GM12878 (cell line): ENCODE measurements at regions of chr19 and their contacts with region 1.

Region 1: GRCh38 chr19:18167975-18168645 is 5.5 kb upstream of the IFI30 start:
- DNase-seq: no peak
- ATAC-seq: peak; percentile 65
- H3K4me3 ChIP-seq: no peak overlapping the region
- H3K27ac ChIP-seq: 0 out of 2 replicates have a peak overlapping the region, but pooled peaks have one; percentile 4
- H3K4me1 ChIP-seq: peaks cover 44% of the 10 kb centered on the region
- H3K27me3 ChIP-seq: no peaks in the 10 kb centered on the region
- CTCF ChIP-seq: peak; percentile 87 to 90 (median 87)
- EP300 ChIP-seq: no peak
- POLR2A ChIP-seq: no peak
- RAD21 ChIP-seq: peak; percentile 77

Region 2: DNA sequence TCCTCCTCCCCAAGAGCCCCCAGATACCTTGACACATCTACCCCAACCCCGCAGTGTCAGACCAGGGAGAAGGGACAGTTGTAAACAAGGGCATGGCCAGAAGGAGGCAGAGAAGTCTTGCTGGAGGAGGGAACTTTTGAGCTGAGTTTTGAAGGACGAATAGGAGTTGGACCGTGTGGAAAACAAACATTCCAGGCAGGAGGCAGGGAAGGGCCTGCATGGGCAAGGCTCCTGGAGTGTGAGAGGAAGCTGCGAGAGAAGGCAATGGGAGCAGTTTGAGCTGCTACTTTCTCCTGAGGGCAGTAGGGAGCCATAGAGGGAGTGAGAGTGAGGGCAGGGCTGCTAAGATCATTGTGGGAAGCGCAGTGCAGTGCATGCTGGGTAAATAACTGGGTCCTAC is 104.6 kb before region 1 on chr19:
- CTCF ChIA-PET with region 1: interaction called, 21 read pairs
- POLR2A ChIA-PET with region 1: no interaction called
- RAD21 ChIA-PET with region 1: interaction called, 9 read pairs
- SMC1A ChIA-PET with region 1: interaction called, 4 read pairs
- in situ Hi-C with region 1: no loop called
- intact Hi-C with region 1: loop called (anchors 2 kb)
- DNase-seq: no peak
- ATAC-seq: peak; percentile 59
- H3K4me3 ChIP-seq: no peak overlapping the region
- H3K27ac ChIP-seq: no peak overlapping the region
- H3K4me1 ChIP-seq: no peaks in the 10 kb centered on the region
- H3K27me3 ChIP-seq: no peaks in the 10 kb centered on the region
- CTCF ChIP-seq: peak; percentile 59 to 67 (median 60)
- EP300 ChIP-seq: no peak
- POLR2A ChIP-seq: no peak
- RAD21 ChIP-seq: peak; percentile 74

Region 3: DNA sequence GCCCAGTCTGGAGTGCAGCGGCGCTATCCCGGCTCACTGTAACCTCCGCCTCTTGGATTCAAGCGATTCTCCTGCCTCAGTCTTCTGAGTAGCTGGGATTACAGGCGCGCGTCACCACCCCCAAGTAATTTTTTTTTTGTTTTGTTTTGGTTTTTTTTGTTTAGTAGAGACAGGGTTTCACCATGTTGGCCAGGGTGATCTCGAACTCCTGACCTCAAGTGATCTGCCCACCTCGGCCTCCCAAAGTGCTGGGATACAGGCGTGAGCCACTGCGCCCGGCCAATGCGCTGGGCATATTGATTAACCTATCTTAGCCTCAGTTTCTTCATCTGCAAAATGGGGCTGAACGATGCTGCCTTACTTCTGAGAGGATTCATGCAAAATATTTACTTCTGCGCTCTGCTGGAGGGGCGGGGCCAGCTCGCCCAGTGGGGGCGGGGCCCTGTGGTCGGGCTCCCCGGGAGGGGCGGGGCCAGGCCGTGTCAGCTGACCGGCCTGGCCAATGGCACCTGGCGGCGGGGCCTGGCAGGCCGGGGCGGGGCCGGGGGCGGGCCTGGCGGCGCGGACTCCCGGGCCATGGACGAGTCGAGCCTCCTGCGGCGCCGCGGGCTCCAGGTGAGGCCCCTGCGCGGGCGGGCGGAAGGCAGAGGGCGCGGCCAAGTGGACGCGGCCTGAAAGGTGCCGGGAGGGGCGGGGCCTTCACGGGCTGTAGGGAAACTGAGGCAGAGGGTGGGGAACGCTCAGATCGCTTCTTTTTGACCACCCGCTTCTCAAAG is 70.7 kb before region 1 on chr19 and contains the start of gene MAST3:
- CTCF ChIA-PET with region 1: interaction called, 4 read pairs
- POLR2A ChIA-PET with region 1: interaction called, 11 read pairs
- RAD21 ChIA-PET with region 1: interaction called, 8 read pairs
- SMC1A ChIA-PET with region 1: interaction called, 3 read pairs
- in situ Hi-C with region 1: no loop called
- intact Hi-C with region 1: loop called (anchors 5 kb)
- DNase-seq: peak; percentile 64
- ATAC-seq: peak; percentile 85
- H3K4me3 ChIP-seq: peak within 1 kb of the TSS; percentile 96
- H3K27ac ChIP-seq: peak within 1 kb of the TSS; percentile 87
- H3K4me1 ChIP-seq: peaks cover 11% of the 10 kb centered on the region
- H3K27me3 ChIP-seq: no peaks in the 10 kb centered on the region
- CTCF ChIP-seq: no peak
- EP300 ChIP-seq: no peak
- POLR2A ChIP-seq: peak; percentile 78
- RAD21 ChIP-seq: no peak
- polyA plus RNA-seq, gene MAST3: 3.5 to 8.5 TPM

Region 4: GRCh38 chr19:18152444-18152816 is 15.7 kb before region 1 on chr19:
- CTCF ChIA-PET with region 1: interaction called, 17 read pairs
- POLR2A ChIA-PET with region 1: interaction called, 5 read pairs
- RAD21 ChIA-PET with region 1: interaction called, 5 read pairs
- SMC1A ChIA-PET with region 1: interaction called, 7 read pairs
- in situ Hi-C with region 1: no loop called
- intact Hi-C with region 1: loop called (anchors 2 kb)
- DNase-seq: peak; percentile 99
- ATAC-seq: peak; percentile 85
- H3K4me3 ChIP-seq: peak overlapping the region; percentile 59; the same call in 1 of the 2 replicates
- H3K27ac ChIP-seq: peak overlapping the region; percentile 88
- H3K4me1 ChIP-seq: peaks cover 15% of the 10 kb centered on the region
- H3K27me3 ChIP-seq: no peaks in the 10 kb centered on the region
- CTCF ChIP-seq: peak; percentile 79 to 90 (median 85)
- EP300 ChIP-seq: peak in 1 of 2 experiments; percentile 7; a peak in 1 of 4 replicates
- POLR2A ChIP-seq: peak; percentile 68
- RAD21 ChIP-seq: peak; percentile 46; the same call in 1 of the 2 replicates

Region 5: GRCh38 chr19:18192673-18193387 is 24.7 kb after region 1 on chr19 and contains the start of gene MPV17L2:
- CTCF ChIA-PET with region 1: interaction called, 9 read pairs
- POLR2A ChIA-PET with region 1: interaction called, 24 read pairs
- RAD21 ChIA-PET with region 1: interaction called, 29 read pairs
- SMC1A ChIA-PET with region 1: interaction called, 20 read pairs
- in situ Hi-C with region 1: no loop called
- intact Hi-C with region 1: loop called (anchors 1 kb)
- DNase-seq: peak; percentile 100
- ATAC-seq: peak; percentile 94
- H3K4me3 ChIP-seq: peak within 1 kb of the TSS; percentile 79
- H3K27ac ChIP-seq: peak within 1 kb of the TSS; percentile 65
- H3K4me1 ChIP-seq: peaks cover 11% of the 10 kb centered on the region
- H3K27me3 ChIP-seq: no peaks in the 10 kb centered on the region
- CTCF ChIP-seq: no peak
- EP300 ChIP-seq: 0 out of 4 replicates have a peak, but pooled peaks of 1 of the 2 experiments have one; percentile 8
- POLR2A ChIP-seq: peak; percentile 72
- RAD21 ChIP-seq: no peak
- polyA plus RNA-seq, gene MPV17L2: 5.1 to 7.7 TPM

Region 6: DNA sequence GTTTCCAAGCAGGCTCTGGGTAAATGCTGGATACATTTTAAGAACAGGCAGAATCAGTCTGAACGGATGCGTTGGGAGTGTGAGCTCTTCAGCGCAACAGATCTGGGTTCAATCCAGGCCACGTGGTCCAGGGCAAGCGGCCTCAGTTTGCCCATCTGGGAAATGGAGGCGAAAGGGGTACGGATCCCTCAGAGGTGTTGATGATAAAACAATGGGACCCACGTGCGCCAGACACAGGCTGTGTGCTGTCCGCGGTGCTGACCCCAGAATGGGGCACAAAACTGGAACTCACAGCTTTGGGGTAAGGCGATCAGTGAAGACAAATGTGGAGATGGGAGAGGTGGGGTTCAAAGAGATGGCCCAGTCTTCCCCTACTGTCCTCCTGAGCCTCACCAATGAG is 71.2 kb after region 1 on chr19:
- CTCF ChIA-PET with region 1: no interaction called
- POLR2A ChIA-PET with region 1: no interaction called
- RAD21 ChIA-PET with region 1: no interaction called
- SMC1A ChIA-PET with region 1: no interaction called
- in situ Hi-C with region 1: no loop called
- intact Hi-C with region 1: no loop called
- DNase-seq: no peak
- ATAC-seq: no peak
- H3K4me3 ChIP-seq: no peak overlapping the region
- H3K27ac ChIP-seq: no peak overlapping the region
- H3K4me1 ChIP-seq: no peaks in the 10 kb centered on the region
- H3K27me3 ChIP-seq: no peaks in the 10 kb centered on the region; a peak in 2 of 4 replicates
- CTCF ChIP-seq: no peak
- EP300 ChIP-seq: no peak
- POLR2A ChIP-seq: no peak
- RAD21 ChIP-seq: no peak